Naive thymus-derived CD4-positive, alpha-beta T cell (primary cell): ENCODE measurements at regions of chr6 and their contacts with region 1.

Region 1: DNA sequence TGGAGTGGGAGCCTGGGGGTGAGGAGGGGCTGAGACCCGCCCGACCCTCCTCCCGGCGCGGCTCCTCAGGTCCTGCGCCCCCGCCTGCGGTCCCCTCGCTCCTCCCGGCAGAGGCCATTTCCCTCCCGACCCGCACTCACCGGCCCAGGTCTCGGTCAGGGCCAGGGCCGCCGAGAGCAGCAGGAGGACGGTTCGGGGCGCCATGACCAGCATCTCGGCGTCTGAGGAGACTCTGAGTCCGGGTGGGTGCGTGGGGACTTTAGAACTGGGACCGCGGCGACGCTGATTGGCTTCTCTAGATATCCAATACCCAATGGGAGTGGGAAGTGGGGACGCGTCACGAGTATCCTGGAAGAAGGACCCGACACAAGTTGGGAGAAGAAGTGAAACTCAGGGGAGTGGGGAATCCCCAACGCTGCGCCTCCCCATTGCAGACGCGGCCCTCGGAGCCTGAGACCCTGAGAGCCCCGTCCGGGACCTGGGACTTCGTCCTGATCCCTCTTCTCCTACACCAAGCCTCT is at the start of gene HLA-B:
- DNase-seq: peak; percentile 65 to 91 (median 82)
- ATAC-seq: peak; percentile 90
- H3K4me3 ChIP-seq: peak within 1 kb of the TSS; percentile 68
- H3K4me3 Mint-ChIP-seq: peak within 1 kb of the TSS; percentile 80 to 100 (median 98)
- H3K27ac ChIP-seq: peak within 1 kb of the TSS; percentile 100
- H3K27ac Mint-ChIP-seq: peak within 1 kb of the TSS; percentile 99 to 100 (median 100)
- H3K4me1 ChIP-seq: peaks cover 28 to 33% of the 10 kb centered on the region in 2 donors
- H3K4me1 Mint-ChIP-seq: peaks cover 49 to 66% (median 58%) of the 10 kb centered on the region in 7 donors
- H3K27me3 ChIP-seq: no peaks in the 10 kb centered on the region
- H3K27me3 Mint-ChIP-seq: peaks cover 0 to 19% (median 0%) of the 10 kb centered on the region in 5 donors
- total RNA-seq, gene HLA-B: 5,136 to 7,364 (median 5,516) TPM

Region 2: GRCh38 chr6:29887819-29888776 is 1468.9 kb before region 1 on chr6:
- CTCF ChIA-PET with region 1: no interaction called
- POLR2A ChIA-PET with region 1: no interaction called
- intact Hi-C with region 1: loop called in 1 of 2 experiments (anchors 10 kb)
- DNase-seq: peak in 8 of 9 donors; percentile 36 to 89 (median 72)
- ATAC-seq: peak; percentile 91
- H3K4me3 ChIP-seq: peak overlapping the region; percentile 73
- H3K4me3 Mint-ChIP-seq: peak overlapping the region in 9 of 10 donors; percentile 79 to 95 (median 94)
- H3K27ac ChIP-seq: peak overlapping the region; percentile 94
- H3K27ac Mint-ChIP-seq: peak overlapping the region in 8 of 9 donors; percentile 72 to 98 (median 94)
- H3K4me1 ChIP-seq: peaks cover 3 to 7% of the 10 kb centered on the region in 2 donors
- H3K4me1 Mint-ChIP-seq: peaks cover 0 to 27% (median 20%) of the 10 kb centered on the region in 7 donors
- H3K27me3 ChIP-seq: no peaks in the 10 kb centered on the region
- H3K27me3 Mint-ChIP-seq: peaks cover 0 to 18% (median 0%) of the 10 kb centered on the region in 5 donors

Region 3: GRCh38 chr6:30678964-30679726 is 677.9 kb before region 1 on chr6:
- CTCF ChIA-PET with region 1: no interaction called
- POLR2A ChIA-PET with region 1: no interaction called
- intact Hi-C with region 1: loop called in 1 of 2 experiments (anchors 1 kb)
- DNase-seq: peak; percentile 86 to 97 (median 92)
- ATAC-seq: peak; percentile 65
- H3K4me3 ChIP-seq: peak overlapping the region; percentile 98
- H3K4me3 Mint-ChIP-seq: peak overlapping the region; percentile 90 to 100 (median 97)
- H3K27ac ChIP-seq: peak overlapping the region; percentile 95
- H3K27ac Mint-ChIP-seq: peak overlapping the region; percentile 85 to 99 (median 97)
- H3K4me1 ChIP-seq: peaks cover 5 to 24% of the 10 kb centered on the region in 2 donors
- H3K4me1 Mint-ChIP-seq: peaks cover 20 to 47% (median 38%) of the 10 kb centered on the region in 7 donors
- H3K27me3 ChIP-seq: no peaks in the 10 kb centered on the region
- H3K27me3 Mint-ChIP-seq: no peaks in the 10 kb centered on the region

Region 4: GRCh38 chr6:31308050-31308844 is 48.8 kb before region 1 on chr6:
- CTCF ChIA-PET with region 1: no interaction called
- POLR2A ChIA-PET with region 1: interaction called, 4 read pairs
- intact Hi-C with region 1: loop called in 1 of 2 experiments (anchors 2 kb)
- DNase-seq: peak; percentile 24 to 84 (median 68)
- ATAC-seq: peak; percentile 96
- H3K4me3 ChIP-seq: peak overlapping the region; percentile 71
- H3K4me3 Mint-ChIP-seq: peak overlapping the region; percentile 72 to 93 (median 88)
- H3K27ac ChIP-seq: peak overlapping the region; percentile 61
- H3K27ac Mint-ChIP-seq: peak overlapping the region in 7 of 9 donors; percentile 65 to 93 (median 82)
- H3K4me1 ChIP-seq: peaks cover 0 to 5% of the 10 kb centered on the region in 2 donors
- H3K4me1 Mint-ChIP-seq: peaks cover 0 to 13% (median 0%) of the 10 kb centered on the region in 7 donors
- H3K27me3 ChIP-seq: peaks cover 0 to 3% of the 10 kb centered on the region in 2 donors
- H3K27me3 Mint-ChIP-seq: peaks cover 0 to 50% (median 0%) of the 10 kb centered on the region in 5 donors

Region 5: GRCh38 chr6:31922942-31923341 is 565.9 kb after region 1 on chr6:
- CTCF ChIA-PET with region 1: no interaction called
- POLR2A ChIA-PET with region 1: no interaction called
- intact Hi-C with region 1: no loop called
- DNase-seq: peak in 4 of 9 donors; percentile 18 to 22 (median 22)
- ATAC-seq: no peak
- H3K4me3 ChIP-seq: no peak overlapping the region
- H3K4me3 Mint-ChIP-seq: no peak overlapping the region
- H3K27ac ChIP-seq: no peak overlapping the region
- H3K27ac Mint-ChIP-seq: peak overlapping the region in 1 of 9 donors; percentile 45
- H3K4me1 ChIP-seq: no peaks in the 10 kb centered on the region
- H3K4me1 Mint-ChIP-seq: peaks cover 0 to 8% (median 0%) of the 10 kb centered on the region in 7 donors
- H3K27me3 ChIP-seq: no peaks in the 10 kb centered on the region
- H3K27me3 Mint-ChIP-seq: peaks cover 0 to 3% (median 0%) of the 10 kb centered on the region in 5 donors